ENCODE measurements at regions of chr9 and their contacts with region 1.

Region 1: DNA sequence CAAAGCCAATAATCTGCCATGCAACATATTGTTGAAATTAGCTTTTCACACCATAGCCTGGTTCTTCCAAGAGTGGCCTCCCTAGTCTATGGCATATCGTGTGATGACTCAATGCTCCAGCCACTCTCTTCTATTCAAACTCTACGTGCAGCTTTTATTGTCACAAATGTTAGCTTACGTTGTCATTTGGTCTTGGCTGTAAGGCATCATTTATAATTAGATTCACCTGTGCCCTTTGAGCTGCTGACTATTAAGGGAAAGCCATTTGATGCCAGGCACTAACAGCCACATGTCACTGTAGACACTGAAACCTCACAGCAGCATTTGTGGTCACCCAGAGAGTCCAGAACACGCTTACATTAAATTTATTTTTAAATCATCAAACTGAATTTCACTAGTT is 66.8 kb downstream of the APBA1 start:
- DNase-seq: no peak
- ATAC-seq: peak in 1 of 8 donors; percentile 58
- H3K4me3 ChIP-seq: no peak overlapping the region
- H3K27ac ChIP-seq: no peak overlapping the region
- H3K4me1 ChIP-seq: peaks cover 0 to 10% (median 0%) of the 10 kb centered on the region in 9 donors
- H3K27me3 ChIP-seq: no peaks in the 10 kb centered on the region
- CTCF ChIP-seq: no peak

Region 2: GRCh38 chr9:69357030-69357775 is 248.2 kb before region 1 on chr9:
- intact Hi-C with region 1: no loop called
- DNase-seq: peak; percentile 25 to 40
- ATAC-seq: peak; percentile 72 to 94 (median 88)
- H3K4me3 ChIP-seq: no peak overlapping the region
- H3K27ac ChIP-seq: peak overlapping the region in 9 of 10 donors; percentile 27 to 75 (median 59)
- H3K4me1 ChIP-seq: peaks cover 0 to 34% (median 7%) of the 10 kb centered on the region in 9 donors
- H3K27me3 ChIP-seq: no peaks in the 10 kb centered on the region
- CTCF ChIP-seq: no peak

Region 3: GRCh38 chr9:69573651-69574050 is 31.8 kb before region 1 on chr9:
- intact Hi-C with region 1: no loop called
- DNase-seq: no peak
- ATAC-seq: no peak
- H3K4me3 ChIP-seq: no peak overlapping the region
- H3K27ac ChIP-seq: no peak overlapping the region
- H3K4me1 ChIP-seq: peaks cover 0 to 14% (median 7%) of the 10 kb centered on the region in 9 donors
- H3K27me3 ChIP-seq: no peaks in the 10 kb centered on the region
- CTCF ChIP-seq: no peak

Region 4: GRCh38 chr9:69593301-69593700 is 12.1 kb before region 1 on chr9:
- intact Hi-C with region 1: loop called in 1 of 10 experiments (anchors 1 kb)
- DNase-seq: no peak
- ATAC-seq: no peak
- H3K4me3 ChIP-seq: no peak overlapping the region
- H3K27ac ChIP-seq: no peak overlapping the region
- H3K4me1 ChIP-seq: peaks cover 0 to 24% (median 14%) of the 10 kb centered on the region in 9 donors
- H3K27me3 ChIP-seq: no peaks in the 10 kb centered on the region
- CTCF ChIP-seq: no peak

Region 5: DNA sequence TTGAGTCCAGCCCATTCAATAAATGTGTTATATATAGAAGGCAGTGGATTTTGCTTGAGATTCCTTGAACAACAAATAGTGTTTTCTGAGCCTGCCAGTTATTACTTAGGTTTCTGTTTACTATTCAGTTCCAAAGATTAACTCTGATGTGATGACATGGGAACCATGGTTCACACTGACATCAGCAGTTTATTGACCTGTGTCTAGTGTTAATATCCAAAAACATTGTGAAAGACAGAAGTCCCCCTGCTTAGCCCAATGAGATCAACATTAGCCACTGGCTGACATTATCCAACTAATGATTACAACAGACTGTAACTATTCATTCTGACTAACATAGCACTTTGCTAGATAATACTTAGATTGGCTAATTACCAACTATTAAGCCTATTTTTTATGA is 51.9 kb after region 1 on chr9:
- intact Hi-C with region 1: no loop called
- DNase-seq: no peak
- ATAC-seq: peak in 2 of 8 donors; percentile 65 to 79
- H3K4me3 ChIP-seq: no peak overlapping the region
- H3K27ac ChIP-seq: no peak overlapping the region
- H3K4me1 ChIP-seq: peaks cover 0 to 8% (median 0%) of the 10 kb centered on the region in 9 donors
- H3K27me3 ChIP-seq: no peaks in the 10 kb centered on the region
- CTCF ChIP-seq: no peak

Region 6: GRCh38 chr9:70318002-70318401 is 712.6 kb after region 1 on chr9:
- intact Hi-C with region 1: no loop called
- DNase-seq: no peak
- ATAC-seq: no peak
- H3K4me3 ChIP-seq: no peak overlapping the region
- H3K27ac ChIP-seq: no peak overlapping the region
- H3K4me1 ChIP-seq: no peaks in the 10 kb centered on the region
- H3K27me3 ChIP-seq: no peaks in the 10 kb centered on the region
- CTCF ChIP-seq: no peak

Measured in heart right ventricle (tissue), 16 donors.